Transverse colon (tissue), 4 donors: ENCODE measurements at regions of chr9 and their contacts with region 1.

Region 1: GRCh38 chr9:107588393-107588792 is 98.8 kb upstream of the KLF4 start:
- DNase-seq: peak; percentile 38
- H3K4me3 ChIP-seq: no peak overlapping the region
- H3K27ac ChIP-seq: peak overlapping the region; percentile 81 to 86 (median 82)
- H3K4me1 ChIP-seq: peaks cover 5 to 38% (median 23%) of the 10 kb centered on the region in 4 donors
- H3K27me3 ChIP-seq: no peaks in the 10 kb centered on the region
- CTCF ChIP-seq: no peak
- EP300 ChIP-seq: no peak
- POLR2A ChIP-seq: no peak

Region 2: DNA sequence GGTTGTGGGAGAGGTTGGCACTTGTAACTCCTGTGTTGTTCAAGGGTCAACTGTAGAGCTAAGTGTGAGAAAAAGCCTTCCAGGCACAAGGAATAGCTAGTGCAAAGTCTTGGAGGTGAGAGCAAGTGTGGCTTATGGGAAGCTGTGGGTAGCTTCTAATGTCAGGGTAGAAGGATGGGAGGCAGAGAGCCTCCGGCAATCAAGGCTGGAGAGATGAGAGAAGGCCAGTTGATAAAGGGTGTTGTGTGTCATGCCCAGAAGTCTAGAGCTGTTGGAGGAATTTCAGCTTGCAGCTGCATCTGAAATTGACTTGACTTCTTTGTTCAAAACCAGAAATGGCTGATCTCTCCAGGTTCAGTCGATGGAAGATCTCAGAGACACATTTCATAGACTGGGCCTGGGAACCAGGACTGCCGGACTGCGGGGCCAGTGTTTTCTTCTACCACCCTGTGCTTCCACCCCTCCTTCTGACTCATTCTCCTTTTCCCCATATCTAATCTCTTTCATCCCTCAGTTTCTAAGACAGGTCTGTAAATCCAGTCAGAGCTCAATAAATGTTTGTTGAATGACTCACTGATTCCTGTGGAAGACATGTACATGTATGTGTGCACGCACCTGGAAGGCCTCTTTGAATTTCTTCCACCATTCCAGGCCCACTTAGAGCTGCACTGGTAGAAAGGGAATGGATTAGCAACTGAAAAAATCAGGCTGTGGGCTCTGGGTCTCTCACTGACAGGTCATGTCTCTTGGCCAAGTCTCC is 31.0 kb before region 1 on chr9:
- in situ Hi-C with region 1: no loop called
- intact Hi-C with region 1: loop called (anchors 1 kb)
- DNase-seq: no peak
- H3K4me3 ChIP-seq: no peak overlapping the region
- H3K27ac ChIP-seq: no peak overlapping the region
- H3K4me1 ChIP-seq: no peaks in the 10 kb centered on the region
- H3K27me3 ChIP-seq: no peaks in the 10 kb centered on the region
- CTCF ChIP-seq: no peak
- EP300 ChIP-seq: no peak
- POLR2A ChIP-seq: no peak